Prostate gland (tissue), 2 donors: ENCODE measurements at regions of chr3 and their contacts with region 1.

Region 1: DNA sequence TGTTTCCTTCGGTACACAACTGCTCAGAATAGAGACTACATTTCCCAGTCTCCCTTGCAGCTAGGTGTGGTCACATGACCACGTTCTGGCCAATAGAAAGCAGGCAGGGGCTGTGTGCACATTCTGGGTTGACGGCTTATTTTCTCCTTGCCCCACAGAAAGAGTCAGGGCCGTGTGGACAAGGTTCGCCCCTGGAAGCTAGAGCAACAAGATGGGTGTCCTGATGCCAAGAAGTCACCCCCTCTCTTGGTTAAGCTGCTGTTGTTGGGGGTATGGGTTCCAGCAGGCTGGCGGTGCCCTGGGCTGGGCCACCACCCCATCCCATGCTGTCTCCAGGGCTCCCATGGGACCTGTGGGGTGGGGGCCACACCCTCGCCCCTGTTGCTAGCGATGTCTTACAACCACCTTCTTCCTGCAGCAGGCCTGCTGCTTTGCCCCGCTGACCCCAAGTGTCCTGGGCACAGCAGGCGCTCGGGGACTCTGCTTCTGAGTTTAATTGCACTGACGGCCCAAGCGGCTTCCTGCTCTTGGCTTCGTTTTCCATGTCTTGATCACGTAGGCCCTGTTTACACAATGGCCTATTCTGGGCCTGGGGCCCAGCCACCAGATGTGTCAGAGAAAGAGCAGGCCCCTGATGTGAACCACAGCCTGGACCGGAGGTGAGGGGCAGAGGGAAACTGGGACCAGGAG is 24.9 kb downstream of the ABTB1 start:
- DNase-seq: peak; percentile 59
- H3K4me3 ChIP-seq: no peak overlapping the region
- H3K27ac ChIP-seq: peak overlapping the region; percentile 74 to 82
- H3K4me1 ChIP-seq: peaks cover 13% of the 10 kb centered on the region
- H3K27me3 ChIP-seq: no peaks in the 10 kb centered on the region
- CTCF ChIP-seq: no peak
- POLR2A ChIP-seq: no peak

Region 2: DNA sequence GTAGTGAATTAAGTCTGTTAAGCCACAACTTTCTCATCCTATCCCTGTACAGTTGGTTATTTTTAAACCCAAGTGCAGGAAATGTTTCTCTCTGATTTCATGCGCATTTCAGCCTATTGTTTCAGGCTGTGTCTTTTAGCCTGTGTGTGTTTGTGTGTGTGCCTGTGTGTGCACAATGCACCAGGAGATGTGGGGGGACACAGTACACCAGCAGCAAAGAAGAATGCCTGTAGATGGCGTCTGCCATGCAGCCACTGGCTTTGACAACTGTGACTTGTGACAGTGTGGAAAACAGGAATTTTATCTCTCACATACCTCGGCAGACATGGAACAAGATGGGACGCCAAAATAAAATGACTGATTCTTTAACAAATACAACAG is 758.4 kb before region 1 on chr3:
- intact Hi-C with region 1: no loop called
- DNase-seq: no peak
- H3K4me3 ChIP-seq: no peak overlapping the region
- H3K27ac ChIP-seq: no peak overlapping the region
- H3K4me1 ChIP-seq: no peaks in the 10 kb centered on the region
- H3K27me3 ChIP-seq: no peaks in the 10 kb centered on the region
- CTCF ChIP-seq: no peak
- POLR2A ChIP-seq: no peak

Region 3: GRCh38 chr3:127735767-127736704 is 38.3 kb after region 1 on chr3:
- intact Hi-C with region 1: loop called (anchors 5 kb)
- DNase-seq: no peak
- H3K4me3 ChIP-seq: no peak overlapping the region
- H3K27ac ChIP-seq: peak overlapping the region; percentile 33 to 39
- H3K4me1 ChIP-seq: peaks cover 11% of the 10 kb centered on the region
- H3K27me3 ChIP-seq: no peaks in the 10 kb centered on the region
- CTCF ChIP-seq: no peak
- POLR2A ChIP-seq: no peak